ENCODE measurements at regions of chr3 and their contacts with region 1.

Region 1: DNA sequence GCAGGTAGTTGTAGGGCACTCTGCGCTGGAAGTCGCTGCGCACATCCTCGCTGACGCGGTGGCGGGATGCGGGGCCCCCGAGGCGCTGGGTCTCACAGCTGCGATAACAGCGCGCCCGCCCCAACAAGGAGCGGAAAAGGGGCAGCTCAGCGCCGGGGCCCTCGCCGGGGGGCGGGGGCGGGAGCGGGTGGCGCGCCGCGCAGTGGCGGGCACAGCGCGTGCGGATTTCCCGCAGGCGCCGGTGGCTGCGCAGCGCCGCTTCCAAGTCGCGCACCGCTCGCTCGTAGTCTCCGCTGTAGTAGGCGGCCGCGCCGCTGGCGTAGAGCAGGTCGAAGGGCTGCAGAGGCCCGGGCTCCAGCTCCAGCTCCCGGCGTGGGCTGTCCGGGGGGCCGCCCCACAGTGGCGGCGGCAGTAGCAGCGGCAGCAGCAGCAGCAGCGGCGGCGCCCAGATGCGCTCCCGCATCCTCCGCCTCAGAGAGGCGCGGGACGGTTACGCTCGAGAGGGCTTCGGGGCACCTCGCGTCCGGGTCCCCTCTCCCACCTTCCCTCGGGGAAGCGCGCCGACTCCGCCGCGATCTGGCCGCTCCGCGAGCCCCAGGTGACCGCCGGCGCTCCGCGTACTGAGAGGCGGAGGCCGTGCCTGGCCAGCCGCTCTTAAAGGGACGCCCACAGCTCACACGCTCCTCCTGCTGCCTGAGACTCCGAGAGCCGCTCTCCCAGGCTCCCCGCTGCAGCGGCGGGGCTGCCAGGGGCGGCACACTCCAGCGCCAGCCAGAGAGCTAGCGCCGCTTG is at the start of gene P3H2:
- DNase-seq: no peak
- ATAC-seq: peak; percentile 82
- H3K4me3 ChIP-seq: peak within 1 kb of the TSS; percentile 63
- H3K27ac ChIP-seq: peak within 1 kb of the TSS; percentile 39
- H3K4me1 ChIP-seq: peaks cover 4% of the 10 kb centered on the region; the same call in 1 of the 2 replicates
- H3K27me3 ChIP-seq: peaks cover 2 to 3% of the 10 kb centered on the region in 2 experiments; a peak in 3 of 4 replicates
- CTCF ChIP-seq: peak; percentile 25 to 36 (median 30); a peak in 4 of 6 replicates
- EP300 ChIP-seq: no peak
- POLR2A ChIP-seq: peak; percentile 70
- RAD21 ChIP-seq: peak; percentile 50
- polyA plus RNA-seq, gene P3H2: 27.0 to 36.7 TPM

Region 2: DNA sequence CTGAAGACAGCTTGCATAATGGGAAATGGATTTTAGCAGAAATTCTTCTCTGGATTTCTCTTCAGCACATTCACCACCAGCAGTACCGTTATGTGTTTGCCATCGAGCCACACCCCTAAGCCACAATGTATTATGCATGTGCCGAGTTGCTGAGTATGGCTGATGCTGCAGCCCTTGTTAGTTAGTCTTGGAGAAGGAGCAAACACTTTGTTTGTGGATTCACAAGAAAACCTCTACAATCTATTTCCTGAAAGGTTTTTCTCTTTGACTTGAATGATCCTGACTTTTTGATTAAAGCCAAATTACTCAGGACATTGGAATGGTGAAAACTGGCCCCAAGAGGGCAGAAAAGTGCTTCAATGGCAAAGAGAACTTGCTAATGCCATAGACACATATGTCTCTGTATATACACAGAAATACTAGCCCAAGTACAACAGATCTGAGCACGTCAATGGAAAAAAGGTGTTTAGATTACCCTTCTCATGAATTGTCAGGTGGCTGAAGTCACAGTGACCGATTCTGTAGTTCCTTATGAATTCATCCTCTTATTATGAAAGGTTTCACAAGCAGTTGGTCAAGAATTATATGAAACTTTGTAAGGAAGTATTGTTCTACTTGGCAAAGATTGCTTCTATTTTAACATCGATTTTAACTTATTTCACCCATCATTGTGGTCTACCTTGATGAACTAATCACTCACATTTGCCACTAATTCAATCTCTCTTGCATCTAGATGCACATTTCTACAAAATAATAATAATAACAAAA is 102.8 kb before region 1 on chr3:
- CTCF ChIA-PET with region 1: no interaction called
- POLR2A ChIA-PET with region 1: no interaction called
- RAD21 ChIA-PET with region 1: no interaction called
- SMC1A ChIA-PET with region 1: interaction called, 4 read pairs
- in situ Hi-C with region 1: no loop called
- intact Hi-C with region 1: loop called (anchors 2 kb)
- DNase-seq: no peak
- ATAC-seq: peak; percentile 75
- H3K4me3 ChIP-seq: no peak overlapping the region
- H3K27ac ChIP-seq: no peak overlapping the region
- H3K4me1 ChIP-seq: no peaks in the 10 kb centered on the region
- H3K27me3 ChIP-seq: no peaks in the 10 kb centered on the region
- CTCF ChIP-seq: peak in 2 of 3 experiments; percentile 12 to 49; a peak in 2 of 6 replicates
- EP300 ChIP-seq: no peak
- POLR2A ChIP-seq: no peak
- RAD21 ChIP-seq: peak; percentile 64

Region 3: GRCh38 chr3:190092250-190092649 is 28.2 kb before region 1 on chr3:
- CTCF ChIA-PET with region 1: interaction called, 5 read pairs
- POLR2A ChIA-PET with region 1: interaction called, 4 read pairs
- RAD21 ChIA-PET with region 1: interaction called, 6 read pairs
- SMC1A ChIA-PET with region 1: interaction called, 10 read pairs
- in situ Hi-C with region 1: no loop called
- intact Hi-C with region 1: no loop called
- DNase-seq: no peak
- ATAC-seq: no peak
- H3K4me3 ChIP-seq: no peak overlapping the region
- H3K27ac ChIP-seq: no peak overlapping the region
- H3K4me1 ChIP-seq: no peaks in the 10 kb centered on the region
- H3K27me3 ChIP-seq: no peaks in the 10 kb centered on the region
- CTCF ChIP-seq: no peak
- EP300 ChIP-seq: no peak
- POLR2A ChIP-seq: no peak
- RAD21 ChIP-seq: no peak

Region 4: DNA sequence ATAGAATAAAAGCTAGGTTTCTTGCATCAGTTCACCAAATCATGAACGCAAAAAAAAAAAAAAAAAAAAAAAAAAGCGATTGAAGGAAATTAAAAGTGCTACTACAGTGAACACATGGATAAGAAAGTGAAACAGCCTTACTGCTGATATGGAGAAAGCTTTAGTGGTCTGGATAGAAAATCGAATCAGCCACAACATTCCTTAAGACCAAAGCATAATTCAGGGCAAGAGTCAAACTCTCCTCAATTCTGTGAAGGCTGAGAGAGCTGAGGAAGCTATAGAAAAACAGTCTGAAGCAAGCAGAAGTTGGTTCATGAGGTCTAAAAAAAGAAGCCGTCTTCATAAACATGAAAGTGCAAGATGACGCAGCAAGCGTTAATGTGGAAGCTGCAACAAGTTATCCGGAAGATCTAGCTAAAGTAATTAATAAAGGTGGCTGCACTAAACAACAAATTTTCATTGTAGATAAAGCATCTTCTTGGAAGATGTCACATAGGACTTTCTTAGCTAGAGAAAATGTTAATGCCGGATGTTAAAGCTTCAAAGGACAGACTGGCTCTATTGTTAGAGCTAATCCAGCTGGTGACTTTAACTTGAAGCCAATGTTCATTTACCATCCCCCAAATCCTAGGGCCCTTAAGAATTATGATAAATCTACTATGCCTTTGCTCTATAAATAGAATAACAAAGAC is 19.0 kb before region 1 on chr3:
- CTCF ChIA-PET with region 1: interaction called, 5 read pairs
- POLR2A ChIA-PET with region 1: interaction called, 4 read pairs
- RAD21 ChIA-PET with region 1: interaction called, 18 read pairs
- SMC1A ChIA-PET with region 1: interaction called, 42 read pairs
- in situ Hi-C with region 1: no loop called
- intact Hi-C with region 1: no loop called
- DNase-seq: no peak
- ATAC-seq: peak; percentile 42
- H3K4me3 ChIP-seq: no peak overlapping the region
- H3K27ac ChIP-seq: peak overlapping the region; percentile 41
- H3K4me1 ChIP-seq: no peaks in the 10 kb centered on the region
- H3K27me3 ChIP-seq: no peaks in the 10 kb centered on the region
- CTCF ChIP-seq: no peak
- EP300 ChIP-seq: no peak
- POLR2A ChIP-seq: no peak
- RAD21 ChIP-seq: no peak

Region 5: DNA sequence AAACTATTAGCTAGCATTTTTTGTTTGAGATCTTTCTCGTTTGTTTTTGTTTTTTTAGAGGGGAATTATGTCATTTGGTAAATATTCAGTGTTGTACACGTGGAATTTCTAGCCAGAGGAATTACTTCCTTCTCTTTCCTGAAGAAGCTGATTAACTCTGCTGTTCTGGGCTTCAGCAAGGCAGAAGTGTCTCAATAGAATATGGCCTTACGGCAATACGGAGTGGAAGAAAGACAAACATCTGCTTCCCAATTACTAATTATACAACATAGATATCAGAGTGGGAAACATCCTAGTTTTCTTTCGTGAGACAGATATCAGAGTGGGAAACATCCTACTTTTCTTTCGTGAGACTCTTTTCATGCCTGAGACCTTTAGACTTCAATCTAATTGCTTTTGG is 11.7 kb before region 1 on chr3:
- CTCF ChIA-PET with region 1: interaction called, 6 read pairs
- POLR2A ChIA-PET with region 1: interaction called, 4 read pairs
- RAD21 ChIA-PET with region 1: interaction called, 16 read pairs
- SMC1A ChIA-PET with region 1: interaction called, 11 read pairs
- in situ Hi-C with region 1: no loop called
- intact Hi-C with region 1: no loop called
- DNase-seq: no peak
- ATAC-seq: no peak
- H3K4me3 ChIP-seq: no peak overlapping the region
- H3K27ac ChIP-seq: no peak overlapping the region
- H3K4me1 ChIP-seq: no peaks in the 10 kb centered on the region
- H3K27me3 ChIP-seq: no peaks in the 10 kb centered on the region
- CTCF ChIP-seq: no peak
- EP300 ChIP-seq: no peak
- POLR2A ChIP-seq: no peak
- RAD21 ChIP-seq: no peak

Region 6: GRCh38 chr3:190197346-190197763 is 76.9 kb after region 1 on chr3:
- CTCF ChIA-PET with region 1: interaction called, 3 read pairs
- POLR2A ChIA-PET with region 1: interaction called, 4 read pairs
- RAD21 ChIA-PET with region 1: interaction called, 17 read pairs
- SMC1A ChIA-PET with region 1: interaction called, 4 read pairs
- in situ Hi-C with region 1: no loop called
- intact Hi-C with region 1: loop called (anchors 5 kb)
- DNase-seq: no peak
- ATAC-seq: peak; percentile 50
- H3K4me3 ChIP-seq: no peak overlapping the region
- H3K27ac ChIP-seq: no peak overlapping the region
- H3K4me1 ChIP-seq: no peaks in the 10 kb centered on the region
- H3K27me3 ChIP-seq: no peaks in the 10 kb centered on the region
- CTCF ChIP-seq: no peak
- EP300 ChIP-seq: no peak
- POLR2A ChIP-seq: no peak
- RAD21 ChIP-seq: no peak